ENCODE measurements at regions of chr4 and their contacts with region 1.

Region 1: DNA sequence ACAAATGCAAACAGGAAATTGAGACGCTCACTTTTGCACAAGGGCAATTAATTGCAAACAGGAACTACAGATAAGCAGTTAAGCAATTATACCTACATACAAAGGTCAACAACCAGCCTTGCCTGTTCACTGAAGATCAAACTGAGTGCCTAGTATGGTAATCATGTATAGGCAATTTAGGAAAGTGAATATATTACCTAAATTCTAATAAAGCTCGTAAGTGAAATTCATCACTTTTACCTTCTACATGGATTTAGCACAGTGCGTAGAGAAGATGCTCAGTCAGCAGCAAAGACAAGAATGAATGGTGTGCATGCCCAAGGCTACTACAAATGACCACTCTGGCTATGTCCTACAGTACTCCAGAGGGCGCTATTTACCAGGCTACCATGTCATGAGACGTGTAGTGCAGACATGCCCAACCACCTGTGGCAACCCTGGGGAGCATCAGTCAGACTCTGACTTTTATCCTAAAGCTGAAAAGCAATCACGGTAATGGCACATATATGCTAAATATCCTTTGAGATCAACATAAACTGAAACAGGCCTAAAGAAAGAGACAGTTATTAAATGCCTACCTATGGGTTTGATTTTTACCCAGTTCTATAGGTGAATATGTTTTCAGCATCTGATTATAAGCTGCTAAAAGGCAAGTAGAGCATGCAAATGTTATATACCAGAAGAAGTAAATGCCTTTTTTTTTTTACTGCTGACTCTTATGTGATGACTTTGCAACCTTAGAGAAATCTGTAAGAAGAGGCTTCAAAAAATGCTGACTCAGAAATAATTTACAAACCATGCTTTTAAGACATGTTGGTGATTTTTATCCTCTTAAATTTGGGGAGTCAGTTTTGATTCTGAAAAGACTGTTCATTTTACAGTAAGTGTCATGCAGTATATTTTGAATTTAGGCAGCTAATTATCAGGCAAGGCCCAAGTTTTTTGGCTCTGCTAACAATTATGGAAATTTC is 178.0 kb downstream of the PPP3CA start:
- DNase-seq: no peak
- H3K4me3 ChIP-seq: no peak overlapping the region
- H3K27ac ChIP-seq: no peak overlapping the region
- H3K27me3 ChIP-seq: no peaks in the 10 kb centered on the region
- CTCF ChIP-seq: peak; percentile 67

Region 2: GRCh38 chr4:101515099-101515498 is 345.8 kb after region 1 on chr4:
- CTCF ChIA-PET with region 1: no interaction called
- POLR2A ChIA-PET with region 1: no interaction called
- DNase-seq: no peak
- H3K4me3 ChIP-seq: no peak overlapping the region
- H3K27ac ChIP-seq: no peak overlapping the region
- H3K27me3 ChIP-seq: no peaks in the 10 kb centered on the region
- CTCF ChIP-seq: no peak

Region 3: DNA sequence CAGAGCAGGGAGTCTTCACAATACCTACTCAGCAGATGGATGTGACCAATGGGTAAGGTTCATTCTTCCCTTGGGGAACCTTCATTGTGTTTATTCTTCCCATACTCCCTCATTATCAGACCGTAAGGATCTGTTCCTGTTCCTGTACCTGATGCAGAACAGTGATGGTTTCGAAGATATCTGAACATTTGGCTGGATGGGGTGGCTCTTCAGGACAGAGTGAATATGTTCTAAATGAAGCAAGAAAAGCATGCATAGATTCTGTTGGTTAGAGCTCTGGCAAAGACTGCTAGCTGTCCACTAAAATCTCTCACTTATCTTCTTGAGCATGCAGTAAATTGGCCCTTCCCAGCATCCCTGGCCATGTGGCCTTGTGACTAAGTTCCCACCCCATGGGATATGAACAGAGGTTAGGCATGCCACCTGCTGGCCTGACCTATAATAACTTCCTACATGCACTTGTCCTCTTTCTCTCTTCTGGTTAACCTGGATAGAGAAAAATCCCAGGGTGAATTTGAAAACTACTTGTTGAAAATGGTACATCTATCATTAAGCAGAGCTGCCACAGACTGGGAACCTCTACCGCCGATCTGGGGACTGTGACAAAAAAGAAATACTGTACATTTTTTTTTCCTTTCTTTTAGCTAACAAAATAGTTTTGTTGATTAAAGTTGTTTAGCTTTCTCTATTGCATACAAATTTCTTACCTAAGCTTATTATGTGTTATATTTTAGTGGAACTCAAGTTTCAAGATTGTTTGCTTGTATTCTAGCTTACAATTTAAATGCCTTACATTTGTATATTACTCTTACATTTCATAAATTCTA is 561.2 kb after region 1 on chr4:
- CTCF ChIA-PET with region 1: interaction called, 46 read pairs
- POLR2A ChIA-PET with region 1: no interaction called
- DNase-seq: peak; percentile 29
- H3K4me3 ChIP-seq: no peak overlapping the region
- H3K27ac ChIP-seq: no peak overlapping the region
- H3K27me3 ChIP-seq: no peaks in the 10 kb centered on the region
- CTCF ChIP-seq: peak; percentile 74